ENCODE measurements at regions of chr15 and their contacts with region 1.

Region 1: DNA sequence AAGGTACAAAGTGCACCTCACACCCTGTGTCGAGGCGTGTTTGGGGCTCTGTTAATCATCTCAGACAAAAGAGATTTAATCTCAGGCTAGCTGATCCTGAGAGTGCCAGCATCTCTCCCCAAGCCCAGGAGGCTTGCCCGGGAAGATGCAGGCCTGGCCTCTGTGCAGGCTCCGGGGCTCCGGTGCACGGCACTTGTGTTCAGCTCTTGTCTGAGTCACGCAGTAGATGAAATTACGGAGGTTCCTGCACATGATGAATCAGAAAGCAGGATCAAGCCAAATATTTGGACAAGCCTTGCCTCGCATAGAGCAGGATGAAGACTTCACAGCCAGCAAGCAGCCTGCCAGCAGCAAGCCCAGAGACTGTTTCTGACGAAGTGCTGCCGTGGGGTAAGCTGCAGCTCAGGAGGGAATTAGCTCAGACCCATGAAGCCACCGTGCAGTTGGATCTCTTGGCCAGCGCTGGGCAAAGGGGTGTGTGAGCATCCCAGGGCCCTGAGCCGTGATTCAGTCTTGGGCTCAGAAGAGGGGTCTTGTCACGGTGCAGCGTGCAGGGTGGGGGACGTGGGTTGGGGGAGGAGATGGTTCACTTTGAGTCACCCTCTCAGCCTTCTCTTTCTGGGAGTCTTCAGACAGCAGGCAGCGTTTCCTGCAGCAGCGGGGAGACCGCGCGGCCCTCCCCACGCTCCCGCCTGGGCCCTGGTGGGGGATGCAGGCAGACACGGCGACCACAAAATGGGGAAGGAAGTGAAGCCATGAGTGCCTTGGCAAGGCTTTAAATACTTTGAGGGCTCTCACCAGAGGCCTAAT is 89.2 kb upstream of the MEF2A start:
- DNase-seq: peak in 8 of 10 donors; percentile 56 to 73 (median 63)
- H3K4me3 ChIP-seq: peak overlapping the region in 6 of 59 donors; percentile 4 to 18 (median 12)
- H3K27ac ChIP-seq: peak overlapping the region in 58 of 59 donors; percentile 23 to 91 (median 78)
- H3K27me3 ChIP-seq: no peaks in the 10 kb centered on the region
- CTCF ChIP-seq: no peak

Region 2: DNA sequence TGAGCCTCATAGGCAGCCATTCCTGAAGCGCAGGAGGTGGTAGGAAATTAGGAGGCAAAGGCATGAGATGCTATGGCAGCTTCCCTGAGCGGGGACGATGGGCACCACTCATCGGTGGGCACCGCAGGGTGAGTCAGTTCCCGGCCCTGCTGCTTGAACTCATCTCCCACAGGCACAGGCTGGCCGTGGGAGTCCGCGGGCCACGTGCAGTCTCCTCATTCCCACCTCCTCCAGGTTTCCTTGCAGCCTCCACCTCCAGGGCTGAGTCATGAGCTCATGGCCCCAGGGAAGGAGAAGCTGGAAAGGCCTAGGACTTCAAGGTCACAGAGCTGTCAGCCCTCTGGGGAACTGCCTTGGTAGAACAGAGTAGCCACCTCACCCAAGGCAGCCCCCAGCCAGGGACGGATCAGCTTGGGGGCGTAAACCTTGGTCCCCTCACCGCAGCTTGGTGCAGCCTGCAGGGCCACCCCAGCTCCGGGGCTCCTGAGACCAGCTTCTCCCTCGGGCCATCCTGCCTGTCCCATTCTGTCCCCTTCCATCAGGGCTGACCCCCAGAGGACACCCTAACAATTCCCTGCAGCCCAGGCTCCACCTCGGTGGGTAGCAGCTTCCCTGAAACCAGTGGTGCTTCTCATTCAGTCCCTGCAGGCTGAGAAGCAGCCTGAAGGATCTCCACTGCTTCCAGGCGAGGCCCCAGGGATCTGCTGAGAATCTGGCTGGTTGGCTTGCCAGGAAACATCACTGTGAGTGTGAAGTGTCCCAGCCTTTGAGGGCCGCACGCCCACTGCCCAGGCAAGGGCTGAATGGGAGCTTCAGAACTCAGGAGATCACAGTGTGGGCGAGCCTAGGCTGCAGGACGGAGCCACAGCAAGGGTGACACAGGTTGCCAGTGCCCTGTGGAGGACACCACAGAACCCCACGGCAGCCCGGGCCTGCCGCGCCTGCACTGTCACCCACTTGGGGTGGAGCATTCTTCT is 61.6 kb before region 1 on chr15:
- intact Hi-C with region 1: loop called (anchors 2 to 10 kb)
- DNase-seq: peak in 7 of 10 donors; percentile 30 to 84 (median 61)
- H3K4me3 ChIP-seq: no peak overlapping the region
- H3K27ac ChIP-seq: peak overlapping the region in 48 of 59 donors; percentile 6 to 83 (median 64)
- H3K27me3 ChIP-seq: no peaks in the 10 kb centered on the region
- CTCF ChIP-seq: no peak

Region 3: DNA sequence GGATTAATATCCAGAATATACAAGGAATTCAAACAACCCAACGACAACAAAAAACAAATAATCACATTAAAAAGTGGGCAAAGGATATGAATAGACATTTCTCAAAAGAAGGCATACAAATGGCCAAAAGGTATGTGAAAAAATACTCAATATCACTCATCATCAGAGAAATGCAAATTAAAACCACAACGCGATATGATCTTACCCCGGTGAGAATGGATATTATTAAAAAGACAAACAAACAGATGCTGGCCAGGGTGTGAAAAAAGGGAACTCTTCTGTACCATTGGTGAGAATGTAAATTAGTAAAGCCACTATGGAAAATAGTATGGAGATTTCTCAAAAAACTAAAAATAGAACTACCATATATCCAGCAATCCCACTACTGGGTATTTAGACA is 45.7 kb after region 1 on chr15:
- intact Hi-C with region 1: no loop called
- DNase-seq: no peak
- H3K4me3 ChIP-seq: no peak overlapping the region
- H3K27ac ChIP-seq: no peak overlapping the region
- H3K27me3 ChIP-seq: no peaks in the 10 kb centered on the region
- CTCF ChIP-seq: no peak